Right ventricle myocardium inferior (tissue), 1 donor: ENCODE measurements at regions of chr21 and their contacts with region 1.

Region 1: DNA sequence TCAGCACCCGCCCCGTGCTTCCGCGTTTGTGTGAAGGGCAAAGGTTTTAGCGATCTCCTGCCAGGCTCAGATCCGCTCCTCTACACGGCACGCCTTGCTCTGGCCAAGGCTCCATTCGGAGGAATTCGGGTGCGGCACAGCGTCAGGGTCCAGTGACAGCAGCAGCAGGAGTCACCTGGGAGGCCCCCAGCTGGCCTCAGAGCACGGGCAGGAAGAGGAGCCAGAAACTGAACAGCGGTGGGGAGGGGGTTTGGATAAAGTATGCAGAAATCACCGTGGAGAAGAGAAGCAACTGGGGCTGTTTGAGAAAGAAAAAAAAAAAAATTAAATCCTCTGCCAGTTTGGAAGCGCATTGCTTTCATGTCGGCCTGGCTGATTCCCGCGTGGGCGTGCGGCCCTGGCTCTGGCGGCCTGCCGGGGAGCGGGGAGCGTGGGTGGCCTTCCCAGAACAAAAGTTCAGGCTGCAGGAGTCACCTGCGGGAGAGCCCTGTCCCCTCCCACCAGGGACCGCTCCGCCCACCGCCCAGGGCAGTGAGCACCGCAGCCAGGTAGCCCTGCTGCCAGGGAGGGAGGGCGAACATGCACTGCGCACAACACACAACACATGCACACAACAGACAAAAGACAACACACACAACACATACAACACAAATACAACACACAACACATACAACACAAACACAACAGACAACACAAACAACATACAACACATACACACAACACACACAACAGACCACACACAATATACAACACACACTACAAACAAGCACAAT is 107.6 kb downstream of the ETS2 start:
- DNase-seq: peak; percentile 84
- ATAC-seq: peak; percentile 50

Region 2: DNA sequence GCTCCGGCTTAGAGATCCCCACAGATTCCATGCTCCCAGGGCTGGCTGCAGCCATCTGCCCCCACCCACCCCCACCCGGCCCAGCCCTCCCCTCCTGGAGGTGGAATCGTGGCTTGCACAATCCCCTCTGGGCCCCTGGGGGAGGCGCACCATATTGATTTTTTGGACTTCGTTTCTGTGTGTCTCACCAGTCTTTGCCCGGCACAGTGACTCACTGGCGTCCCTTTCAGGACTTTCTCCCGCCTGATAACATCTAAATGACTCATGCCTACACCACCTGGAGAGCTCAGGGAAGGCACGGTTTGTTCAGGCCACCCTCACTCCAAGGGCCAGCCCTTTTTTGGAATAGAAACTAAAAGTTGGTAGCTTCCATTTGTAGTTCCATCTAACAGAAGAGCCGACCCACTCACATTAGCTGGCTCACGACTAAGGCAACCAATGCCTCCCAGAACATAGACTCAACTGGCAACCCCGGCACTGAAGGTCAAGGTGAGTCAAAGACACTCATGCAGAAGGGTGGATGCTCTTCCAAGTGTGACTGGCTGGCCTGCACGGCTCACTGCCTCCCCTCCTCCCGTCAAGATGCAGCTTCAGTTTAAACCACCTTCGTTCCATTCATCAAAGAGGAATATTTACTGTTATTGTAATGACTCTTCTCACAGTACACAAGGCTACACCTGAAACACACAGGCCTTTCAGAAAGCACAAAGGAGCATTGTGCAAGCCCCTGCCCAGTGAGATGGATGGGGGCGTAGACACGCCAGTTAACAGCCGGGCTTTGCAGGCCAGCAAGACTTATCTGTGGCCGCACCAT is 125.6 kb before region 1 on chr21:
- intact Hi-C with region 1: no loop called
- DNase-seq: no peak
- ATAC-seq: no peak

Region 3: GRCh38 chr21:38798481-38798882 is 114.8 kb before region 1 on chr21:
- intact Hi-C with region 1: no loop called
- DNase-seq: no peak
- ATAC-seq: no peak

Region 4: GRCh38 chr21:38848187-38848609 is 65.1 kb before region 1 on chr21:
- intact Hi-C with region 1: loop called (anchors 5 kb)
- DNase-seq: no peak
- ATAC-seq: peak; percentile 75

Region 5: DNA sequence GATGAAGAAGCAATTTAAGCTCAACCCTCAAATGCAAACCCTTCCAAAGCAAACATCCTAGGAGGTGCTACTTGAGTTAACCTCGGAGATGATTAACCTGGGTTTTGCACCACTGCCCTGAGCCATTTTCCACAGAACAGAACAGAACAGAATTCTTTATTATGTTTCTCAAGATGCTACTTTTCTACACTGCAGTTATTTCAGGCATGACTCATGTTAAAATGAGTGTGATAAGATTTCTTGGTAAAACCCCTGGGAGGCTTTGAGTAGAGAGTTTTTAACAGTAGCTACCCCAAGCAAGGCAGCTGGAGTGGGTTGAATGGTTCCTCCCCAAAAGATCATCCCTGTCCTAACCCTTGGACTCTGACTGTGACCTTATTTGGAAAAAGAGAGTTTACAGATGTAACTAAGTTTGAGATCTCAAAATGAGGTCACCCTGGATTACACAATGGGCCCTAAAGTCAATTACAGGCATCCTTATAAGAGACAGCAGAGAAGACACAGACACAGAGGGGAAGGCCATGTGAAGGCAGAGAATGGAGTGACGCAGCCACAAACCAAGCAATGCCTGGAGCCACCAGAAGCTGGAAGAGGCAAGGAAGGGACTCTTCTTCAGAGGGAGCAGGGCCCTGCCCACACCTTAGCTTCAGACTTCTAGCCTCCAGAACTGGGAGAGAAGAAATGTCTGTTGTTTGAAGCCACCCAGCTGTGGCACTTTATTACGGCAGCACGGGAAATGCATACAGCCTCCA is 45.8 kb after region 1 on chr21:
- intact Hi-C with region 1: loop called (anchors 5 kb)
- DNase-seq: no peak
- ATAC-seq: peak; percentile 91

Region 6: DNA sequence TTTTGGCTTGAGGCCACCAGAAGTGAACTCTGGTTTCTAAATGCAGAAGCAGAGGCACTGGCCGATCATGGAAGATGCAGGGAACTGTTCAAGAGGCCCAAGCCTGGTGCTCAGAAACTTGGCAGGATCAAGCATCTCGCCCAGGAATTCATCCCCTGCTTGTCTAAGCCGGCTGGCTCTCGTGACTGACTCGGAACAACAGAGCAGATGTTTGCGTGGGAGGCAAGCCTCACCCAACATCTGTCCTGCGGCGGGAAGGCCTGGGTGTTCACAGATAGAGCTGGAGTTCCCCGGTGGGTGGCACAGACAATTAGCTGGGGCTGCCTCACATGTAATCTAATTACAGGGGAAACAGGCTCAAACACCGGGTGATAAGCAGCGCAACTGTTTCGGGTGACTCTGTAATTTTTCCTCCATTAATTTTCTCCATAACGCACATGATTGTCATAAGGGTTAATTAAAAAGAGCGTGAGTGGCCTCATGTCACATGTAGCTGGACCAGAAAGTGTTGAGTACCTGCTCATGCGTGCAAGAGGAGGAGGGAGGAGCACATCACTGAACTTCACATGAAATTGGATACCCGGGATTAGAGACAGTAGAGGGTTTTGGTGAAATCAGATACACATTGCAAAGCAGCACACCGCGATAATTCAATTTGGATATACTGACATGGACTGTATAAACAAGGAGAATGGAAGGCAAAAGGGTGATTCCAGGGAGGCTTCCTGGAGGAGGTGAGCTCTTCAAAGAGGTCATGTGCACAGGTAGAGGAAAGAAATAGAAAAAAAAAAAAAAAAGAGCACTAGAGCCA is 72.5 kb after region 1 on chr21:
- intact Hi-C with region 1: loop called (anchors 5 kb)
- DNase-seq: peak; percentile 85
- ATAC-seq: peak; percentile 72

Region 7: DNA sequence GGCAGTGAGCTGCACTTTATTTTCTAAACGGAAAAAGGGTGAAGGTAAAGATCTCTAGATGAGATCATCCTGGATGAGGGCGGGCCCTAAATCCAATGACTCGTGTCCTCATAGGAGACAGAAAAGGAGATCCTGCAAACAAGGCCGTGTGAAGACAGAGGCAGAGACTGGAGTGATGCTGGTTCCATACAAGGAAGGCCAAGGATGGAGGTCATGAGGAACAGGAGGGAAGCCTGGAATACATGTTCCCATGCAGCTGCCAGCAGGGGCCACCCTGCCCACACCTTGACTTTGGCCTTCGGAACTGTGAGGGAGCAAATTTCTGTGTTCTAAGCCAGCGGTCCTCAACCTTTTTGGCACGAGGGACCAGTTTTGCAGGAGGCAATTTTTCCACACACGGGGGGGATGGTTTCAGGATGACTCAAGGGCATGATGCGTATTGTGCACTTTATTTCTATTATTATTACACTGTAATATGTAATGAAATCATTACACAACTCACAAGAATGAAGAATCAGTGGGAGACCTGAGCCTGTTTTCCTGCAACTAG is 175.6 kb after region 1 on chr21:
- intact Hi-C with region 1: loop called (anchors 5 kb)
- DNase-seq: no peak
- ATAC-seq: no peak

Region 8: GRCh38 chr21:39332175-39332574 is 418.9 kb after region 1 on chr21:
- intact Hi-C with region 1: no loop called
- DNase-seq: no peak
- ATAC-seq: no peak